ENCODE measurements at regions of chr2 and their contacts with region 1.

Region 1: GRCh38 chr2:118696786-118697465 is 150.5 kb downstream of the EN1 start:
- DNase-seq: no peak
- ATAC-seq: no peak
- H3K4me3 ChIP-seq: no peak overlapping the region
- H3K27ac ChIP-seq: no peak overlapping the region
- H3K4me1 ChIP-seq: no peaks in the 10 kb centered on the region
- H3K27me3 ChIP-seq: no peaks in the 10 kb centered on the region
- CTCF ChIP-seq: no peak
- POLR2A ChIP-seq: no peak

Region 2: DNA sequence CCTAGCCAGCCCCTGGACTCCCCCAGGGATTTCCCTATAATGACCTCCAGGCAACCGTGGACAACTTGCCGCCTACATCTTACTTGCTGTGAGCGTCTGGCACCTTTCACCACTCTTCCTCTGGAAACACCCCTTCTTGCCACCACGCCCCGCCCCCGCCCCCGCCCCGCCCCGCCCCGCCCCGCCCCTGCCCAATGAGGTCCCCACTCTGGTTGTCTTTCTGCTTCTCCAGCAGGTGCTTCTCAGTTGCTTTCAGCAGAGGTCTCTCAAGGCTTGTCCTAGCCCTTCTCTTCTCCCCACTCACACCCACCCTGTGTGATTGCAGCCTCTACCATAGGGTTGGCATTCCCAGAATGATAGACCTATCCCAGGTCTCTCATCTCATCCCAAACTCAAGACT is 64.0 kb before region 1 on chr2:
- in situ Hi-C with region 1: no loop called
- intact Hi-C with region 1: no loop called
- DNase-seq: no peak
- ATAC-seq: no peak
- H3K4me3 ChIP-seq: no peak overlapping the region
- H3K27ac ChIP-seq: no peak overlapping the region
- H3K4me1 ChIP-seq: no peaks in the 10 kb centered on the region
- H3K27me3 ChIP-seq: no peaks in the 10 kb centered on the region
- CTCF ChIP-seq: no peak
- POLR2A ChIP-seq: no peak

Region 3: DNA sequence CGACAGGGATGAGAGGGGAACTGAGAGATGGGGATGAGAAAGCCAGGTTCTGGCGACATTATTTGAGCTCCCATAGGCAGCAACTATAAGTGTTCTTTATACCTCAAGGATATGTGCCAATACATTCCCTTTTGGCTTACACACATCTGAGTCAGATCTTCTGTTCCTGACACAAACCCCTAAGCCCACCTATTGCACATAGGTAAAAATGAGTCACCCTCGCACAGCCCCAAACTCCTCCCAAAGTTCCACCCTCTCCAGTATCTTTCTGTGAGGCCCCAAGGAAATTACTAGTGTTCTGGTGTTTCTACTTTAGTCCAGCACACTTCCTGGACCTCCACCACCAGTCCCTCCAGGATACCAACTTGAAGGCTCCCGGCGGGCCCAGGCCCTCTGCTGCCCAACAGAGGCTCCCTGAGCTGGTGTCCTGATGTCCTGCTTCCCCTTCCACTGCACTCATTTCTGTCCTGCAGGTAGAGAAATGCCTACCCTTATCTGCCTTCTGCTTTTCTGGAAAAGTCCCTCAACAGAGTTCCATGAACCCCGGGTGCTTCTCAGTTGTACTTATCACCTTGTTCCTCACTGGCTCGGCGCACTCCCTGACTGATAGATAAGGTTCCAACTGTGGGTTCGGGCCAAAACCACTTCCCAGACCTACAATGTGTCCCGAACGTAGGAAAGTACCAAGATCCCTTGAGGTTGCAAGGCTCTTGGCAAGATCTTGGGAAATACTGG is 25.1 kb after region 1 on chr2:
- in situ Hi-C with region 1: no loop called
- intact Hi-C with region 1: loop called (anchors 1 kb)
- DNase-seq: no peak
- ATAC-seq: no peak
- H3K4me3 ChIP-seq: no peak overlapping the region
- H3K27ac ChIP-seq: no peak overlapping the region
- H3K4me1 ChIP-seq: no peaks in the 10 kb centered on the region
- H3K27me3 ChIP-seq: no peaks in the 10 kb centered on the region
- CTCF ChIP-seq: no peak
- POLR2A ChIP-seq: no peak

Region 4: GRCh38 chr2:118808429-118808809 is 111.5 kb after region 1 on chr2:
- in situ Hi-C with region 1: no loop called
- intact Hi-C with region 1: no loop called
- DNase-seq: no peak
- ATAC-seq: no peak
- H3K4me3 ChIP-seq: peak overlapping the region in 3 of 4 donors; percentile 9 to 24 (median 9)
- H3K27ac ChIP-seq: peak overlapping the region in 2 of 4 donors; percentile 74 to 76
- H3K4me1 ChIP-seq: peaks cover 7 to 15% of the 10 kb centered on the region in 2 donors
- H3K27me3 ChIP-seq: no peaks in the 10 kb centered on the region
- CTCF ChIP-seq: no peak
- POLR2A ChIP-seq: no peak

Measured in gastrocnemius medialis (tissue), 4 donors.